Naive thymus-derived CD4-positive, alpha-beta T cell (primary cell): ENCODE measurements at regions of chr3 and their contacts with region 1.

Region 1: DNA sequence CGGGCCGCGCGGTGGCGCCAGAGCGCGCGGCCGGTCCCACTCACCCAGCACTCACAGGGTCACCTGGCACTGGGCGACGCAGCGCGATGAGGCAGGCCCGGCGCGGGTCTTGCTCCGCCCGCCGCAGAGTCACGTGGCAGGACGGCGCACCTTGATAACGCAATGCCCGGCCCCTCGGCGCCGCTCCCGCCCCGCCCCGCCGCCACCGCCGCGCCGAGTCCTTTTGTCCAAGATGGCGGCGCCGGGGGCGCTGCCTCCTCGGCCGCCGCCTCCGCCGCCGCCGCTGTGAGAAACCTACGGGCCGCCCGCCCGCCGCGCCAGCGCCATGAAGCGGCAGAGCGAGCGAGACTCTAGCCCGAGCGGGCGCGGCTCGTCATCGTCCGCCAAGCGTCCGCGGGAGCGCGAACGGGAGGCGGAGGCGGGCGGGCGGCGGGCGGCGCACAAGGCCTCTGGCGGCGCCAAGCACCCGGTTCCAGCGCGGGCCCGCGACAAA is at the start of gene RBM15B:
- DNase-seq: peak; percentile 94 to 98 (median 96)
- ATAC-seq: peak; percentile 95
- H3K4me3 ChIP-seq: peak within 1 kb of the TSS; percentile 52
- H3K4me3 Mint-ChIP-seq: peak within 1 kb of the TSS; percentile 76 to 89 (median 83)
- H3K27ac ChIP-seq: peak within 1 kb of the TSS; percentile 90
- H3K27ac Mint-ChIP-seq: peak within 1 kb of the TSS; percentile 79 to 91 (median 88)
- H3K4me1 ChIP-seq: peaks cover 46 to 53% of the 10 kb centered on the region in 2 donors
- H3K4me1 Mint-ChIP-seq: peaks cover 35 to 75% (median 67%) of the 10 kb centered on the region in 7 donors
- H3K27me3 ChIP-seq: no peaks in the 10 kb centered on the region
- H3K27me3 Mint-ChIP-seq: no peaks in the 10 kb centered on the region
- total RNA-seq, gene RBM15B: 29.9 to 40.6 (median 31.3) TPM

Region 2: DNA sequence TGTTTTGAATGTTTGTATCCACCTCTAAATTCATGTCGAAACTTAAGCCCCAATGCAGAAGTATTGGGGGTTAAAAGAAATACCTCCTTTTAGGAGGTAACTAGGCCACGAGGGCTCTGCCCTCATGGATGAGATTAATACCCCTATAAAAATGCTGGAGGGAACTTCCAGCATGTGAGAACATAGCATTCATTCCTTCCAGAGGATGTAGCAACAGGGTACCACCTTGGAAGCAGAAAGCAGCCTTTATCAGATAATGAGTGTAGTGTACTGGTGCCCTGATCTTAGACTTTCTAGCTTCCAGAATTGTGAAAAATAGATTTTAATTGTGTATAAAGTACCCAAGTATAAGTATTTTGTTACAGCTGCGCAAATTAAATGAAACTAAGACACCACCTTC is 359.5 kb before region 1 on chr3:
- CTCF ChIA-PET with region 1: no interaction called
- POLR2A ChIA-PET with region 1: no interaction called
- intact Hi-C with region 1: no loop called
- DNase-seq: no peak
- ATAC-seq: no peak
- H3K4me3 ChIP-seq: no peak overlapping the region
- H3K4me3 Mint-ChIP-seq: no peak overlapping the region
- H3K27ac ChIP-seq: no peak overlapping the region
- H3K27ac Mint-ChIP-seq: no peak overlapping the region
- H3K4me1 ChIP-seq: peaks cover 5 to 13% of the 10 kb centered on the region in 2 donors
- H3K4me1 Mint-ChIP-seq: peaks cover under 1 to 43% (median 30%) of the 10 kb centered on the region in 7 donors
- H3K27me3 ChIP-seq: no peaks in the 10 kb centered on the region
- H3K27me3 Mint-ChIP-seq: peaks cover 0 to 16% (median 0%) of the 10 kb centered on the region in 5 donors

Region 3: DNA sequence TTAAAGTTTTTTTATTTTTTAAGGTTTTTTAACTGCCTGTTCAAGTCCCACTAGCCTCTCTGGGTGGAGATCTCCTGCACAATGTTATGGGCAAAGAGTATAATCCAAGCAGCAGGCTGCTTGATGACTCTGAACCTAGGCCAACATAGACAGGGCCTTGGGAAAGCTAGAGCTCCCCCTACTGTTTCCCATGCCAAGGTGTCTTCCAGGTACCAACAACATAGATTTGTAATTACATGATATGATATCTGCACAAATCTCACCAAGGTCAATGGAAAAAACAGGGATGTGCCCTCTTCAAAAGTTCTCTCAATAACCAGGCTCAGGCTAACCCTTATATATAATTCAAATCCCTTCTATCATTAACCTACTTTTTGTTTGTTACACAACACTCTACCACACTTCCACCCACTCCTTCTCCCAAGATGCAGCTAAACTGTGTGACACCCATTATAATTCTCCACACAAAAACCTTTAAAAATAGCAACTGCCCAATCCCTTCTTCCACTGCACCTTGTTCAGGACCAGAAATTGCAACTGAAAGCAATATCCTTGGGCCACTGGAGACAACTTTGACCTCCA is 43.7 kb after region 1 on chr3:
- CTCF ChIA-PET with region 1: interaction called, 13 read pairs
- POLR2A ChIA-PET with region 1: no interaction called
- intact Hi-C with region 1: loop called (anchors 1 kb)
- DNase-seq: peak in 8 of 9 donors; percentile 26 to 64 (median 52)
- ATAC-seq: peak; percentile 90
- H3K4me3 ChIP-seq: no peak overlapping the region
- H3K4me3 Mint-ChIP-seq: no peak overlapping the region
- H3K27ac ChIP-seq: no peak overlapping the region
- H3K27ac Mint-ChIP-seq: peak overlapping the region in 6 of 9 donors; percentile 16 to 59 (median 34)
- H3K4me1 ChIP-seq: no peaks in the 10 kb centered on the region
- H3K4me1 Mint-ChIP-seq: peaks cover 5 to 13% (median 10%) of the 10 kb centered on the region in 7 donors
- H3K27me3 ChIP-seq: no peaks in the 10 kb centered on the region
- H3K27me3 Mint-ChIP-seq: no peaks in the 10 kb centered on the region

Region 4: GRCh38 chr3:51519848-51520247 is 128.7 kb after region 1 on chr3:
- CTCF ChIA-PET with region 1: no interaction called
- POLR2A ChIA-PET with region 1: no interaction called
- intact Hi-C with region 1: no loop called
- DNase-seq: no peak
- ATAC-seq: no peak
- H3K4me3 ChIP-seq: no peak overlapping the region
- H3K4me3 Mint-ChIP-seq: no peak overlapping the region
- H3K27ac ChIP-seq: no peak overlapping the region
- H3K27ac Mint-ChIP-seq: no peak overlapping the region
- H3K4me1 ChIP-seq: no peaks in the 10 kb centered on the region
- H3K4me1 Mint-ChIP-seq: peaks cover 3 to 10% (median 5%) of the 10 kb centered on the region in 7 donors
- H3K27me3 ChIP-seq: no peaks in the 10 kb centered on the region
- H3K27me3 Mint-ChIP-seq: no peaks in the 10 kb centered on the region

Region 5: GRCh38 chr3:51538459-51539290 is 147.6 kb after region 1 on chr3 and contains the start of gene RAD54L2:
- CTCF ChIA-PET with region 1: no interaction called
- POLR2A ChIA-PET with region 1: no interaction called
- intact Hi-C with region 1: loop called in 1 of 2 experiments (anchors 1 kb)
- DNase-seq: peak; percentile 49 to 87 (median 69)
- ATAC-seq: peak; percentile 96
- H3K4me3 ChIP-seq: peak within 1 kb of the TSS; percentile 68
- H3K4me3 Mint-ChIP-seq: peak within 1 kb of the TSS; percentile 93 to 96 (median 94)
- H3K27ac ChIP-seq: peak within 1 kb of the TSS; percentile 80
- H3K27ac Mint-ChIP-seq: peak within 1 kb of the TSS; percentile 88 to 96 (median 92)
- H3K4me1 ChIP-seq: peaks cover 11 to 18% of the 10 kb centered on the region in 2 donors
- H3K4me1 Mint-ChIP-seq: peaks cover 21 to 57% (median 43%) of the 10 kb centered on the region in 7 donors
- H3K27me3 ChIP-seq: no peaks in the 10 kb centered on the region
- H3K27me3 Mint-ChIP-seq: no peaks in the 10 kb centered on the region
- total RNA-seq, gene RAD54L2: 38.1 to 45.2 (median 40.1) TPM

Region 6: DNA sequence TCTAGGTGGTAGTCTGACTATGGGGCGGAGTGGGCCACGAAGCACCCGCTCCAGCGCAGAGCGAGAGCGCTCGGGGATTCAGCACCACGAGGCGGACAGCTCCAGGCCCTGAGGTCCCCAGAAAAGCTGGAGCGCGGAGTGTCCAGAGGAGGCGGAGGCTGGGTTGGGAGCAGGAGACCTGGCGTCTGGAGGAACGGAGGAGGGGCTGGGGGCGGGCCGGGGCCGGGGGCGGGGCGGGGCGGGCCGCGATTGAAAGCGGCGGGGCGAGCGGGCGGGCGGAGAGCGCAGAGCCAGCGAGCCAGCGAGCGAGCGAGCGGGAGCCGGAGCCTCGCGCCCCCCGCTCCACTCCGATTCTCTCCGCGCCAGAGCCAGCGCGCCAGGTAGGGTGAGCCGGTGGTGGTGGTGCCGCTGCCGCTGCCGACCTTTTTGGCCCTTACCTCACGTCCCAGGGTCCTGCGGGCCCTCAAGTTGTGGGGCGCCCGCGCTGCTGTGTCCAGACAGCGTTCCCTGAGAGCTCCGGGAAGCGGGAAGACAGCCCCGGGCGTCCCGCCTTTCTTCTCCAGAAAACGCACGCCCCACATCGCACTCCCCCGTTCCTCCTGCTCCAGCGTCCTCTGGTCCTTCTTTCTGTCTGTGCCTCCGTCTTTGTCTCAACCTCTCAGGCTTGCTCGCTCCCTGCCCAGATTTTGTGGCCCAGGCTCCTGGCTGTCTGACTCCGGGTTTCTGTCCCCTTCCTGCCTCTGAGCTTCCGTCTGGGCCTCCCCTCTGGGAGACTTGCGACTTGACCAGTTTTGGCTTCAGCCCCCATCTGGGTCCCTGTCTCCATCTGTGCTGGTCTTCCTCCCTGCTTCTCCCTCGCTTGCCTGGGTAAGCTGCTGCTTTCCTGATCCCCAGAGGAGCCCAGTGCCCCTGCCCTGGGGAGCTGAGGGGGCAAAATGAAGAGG is 315.9 kb after region 1 on chr3 and contains the start of gene GRM2:
- CTCF ChIA-PET with region 1: no interaction called
- POLR2A ChIA-PET with region 1: no interaction called
- intact Hi-C with region 1: no loop called
- DNase-seq: peak in 7 of 9 donors; percentile 0 to 43 (median 30)
- ATAC-seq: peak; percentile 30
- H3K4me3 ChIP-seq: no peak within 1 kb of the TSS
- H3K4me3 Mint-ChIP-seq: peak within 1 kb of the TSS in 4 of 10 donors; percentile 18 to 74 (median 38)
- H3K27ac ChIP-seq: no peak within 1 kb of the TSS
- H3K27ac Mint-ChIP-seq: peak within 1 kb of the TSS in 3 of 9 donors; percentile 2 to 46 (median 37)
- H3K4me1 ChIP-seq: no peaks in the 10 kb centered on the region
- H3K4me1 Mint-ChIP-seq: peaks cover 10 to 45% (median 30%) of the 10 kb centered on the region in 7 donors
- H3K27me3 ChIP-seq: no peaks in the 10 kb centered on the region
- H3K27me3 Mint-ChIP-seq: peaks cover 0 to 11% (median 0%) of the 10 kb centered on the region in 5 donors
- total RNA-seq, gene GRM2: 1.3 to 5.1 (median 3.3) TPM